Thyroid gland (tissue), 4 donors: ENCODE measurements at regions of chr7 and their contacts with region 1.

Region 1: DNA sequence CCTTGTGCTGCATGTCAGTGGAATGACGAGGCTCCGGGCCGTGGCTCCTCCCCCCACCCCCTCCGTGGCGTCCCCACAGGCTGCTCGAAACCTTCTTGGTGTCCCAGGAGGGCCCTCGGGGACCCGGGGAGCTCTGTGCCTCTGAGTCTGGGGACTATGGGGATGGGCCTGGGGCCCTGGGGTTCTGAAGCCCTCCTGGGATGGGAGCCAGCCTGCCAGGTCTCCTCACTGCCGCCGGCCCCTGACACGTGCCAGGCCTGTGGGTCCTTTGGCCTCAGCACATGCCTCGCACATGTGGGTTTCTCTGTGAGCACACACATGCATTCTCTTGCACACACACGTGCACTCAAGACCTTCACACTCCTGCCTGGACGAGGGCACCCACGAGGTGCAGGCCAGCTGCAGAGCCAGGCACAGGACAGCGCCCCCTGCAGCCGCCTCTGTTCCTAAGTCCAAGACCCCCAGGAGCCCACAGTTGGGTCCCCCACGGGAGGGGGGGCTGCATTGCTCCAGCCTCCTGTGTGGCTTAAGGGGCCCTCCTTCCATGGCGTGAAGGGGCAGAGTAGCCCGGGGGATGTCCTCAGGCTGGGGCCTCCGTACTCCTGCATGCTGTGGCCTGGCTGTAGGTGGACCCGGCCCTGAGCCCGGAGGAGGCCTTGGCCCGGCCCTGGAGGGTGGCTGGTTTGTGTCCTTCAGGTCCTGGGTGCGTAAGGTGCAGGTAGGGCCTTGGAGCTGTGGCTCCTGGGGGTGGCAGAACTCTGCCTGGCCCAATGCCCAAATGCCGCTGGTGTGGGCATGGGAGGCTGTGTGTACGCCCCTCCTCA is 27.2 kb upstream of the AMZ1 start:
- DNase-seq: no peak
- H3K4me3 ChIP-seq: no peak overlapping the region
- H3K27ac ChIP-seq: no peak overlapping the region
- H3K4me1 ChIP-seq: peaks cover 0 to 13% of the 10 kb centered on the region in 2 donors
- H3K27me3 ChIP-seq: no peaks in the 10 kb centered on the region
- CTCF ChIP-seq: no peak
- POLR2A ChIP-seq: no peak

Region 2: DNA sequence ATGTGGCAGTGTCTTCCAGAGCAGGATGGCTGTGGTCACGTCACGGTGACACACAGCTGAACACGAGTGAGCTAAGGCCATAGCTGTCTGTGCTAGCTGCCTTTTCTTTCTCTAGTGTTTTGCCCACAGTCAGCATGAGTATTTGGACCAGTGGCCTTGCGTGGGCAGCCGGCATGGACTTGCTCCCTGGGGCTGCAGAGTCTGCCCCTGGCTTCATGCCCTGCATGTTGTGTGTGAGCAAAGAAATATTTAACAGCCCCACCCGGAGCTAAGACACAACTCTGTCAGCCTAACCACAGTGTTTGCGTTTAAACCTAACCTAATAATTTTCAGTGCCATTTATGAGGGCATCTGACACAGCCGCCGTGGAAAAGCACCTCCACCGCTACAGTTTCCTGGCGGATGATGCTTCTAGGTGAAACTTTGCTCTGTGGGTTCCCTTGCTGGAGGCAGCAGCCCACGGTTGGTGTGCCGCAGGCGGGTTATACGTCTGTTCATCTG is 242.8 kb before region 1 on chr7:
- intact Hi-C with region 1: no loop called
- DNase-seq: no peak
- H3K4me3 ChIP-seq: no peak overlapping the region
- H3K27ac ChIP-seq: no peak overlapping the region
- H3K4me1 ChIP-seq: peaks cover 2% of the 10 kb centered on the region in 2 donors
- H3K27me3 ChIP-seq: no peaks in the 10 kb centered on the region
- CTCF ChIP-seq: no peak
- POLR2A ChIP-seq: no peak

Region 3: GRCh38 chr7:2608921-2609411 is 51.8 kb before region 1 on chr7:
- intact Hi-C with region 1: loop called (anchors 5 kb)
- DNase-seq: no peak
- H3K4me3 ChIP-seq: no peak overlapping the region
- H3K27ac ChIP-seq: no peak overlapping the region
- H3K4me1 ChIP-seq: peaks cover 18 to 31% of the 10 kb centered on the region in 2 donors
- H3K27me3 ChIP-seq: no peaks in the 10 kb centered on the region
- CTCF ChIP-seq: peak in 1 of 6 experiments; percentile 12
- POLR2A ChIP-seq: no peak